ENCODE measurements at regions of chr19 and their contacts with region 1.

Region 1: DNA sequence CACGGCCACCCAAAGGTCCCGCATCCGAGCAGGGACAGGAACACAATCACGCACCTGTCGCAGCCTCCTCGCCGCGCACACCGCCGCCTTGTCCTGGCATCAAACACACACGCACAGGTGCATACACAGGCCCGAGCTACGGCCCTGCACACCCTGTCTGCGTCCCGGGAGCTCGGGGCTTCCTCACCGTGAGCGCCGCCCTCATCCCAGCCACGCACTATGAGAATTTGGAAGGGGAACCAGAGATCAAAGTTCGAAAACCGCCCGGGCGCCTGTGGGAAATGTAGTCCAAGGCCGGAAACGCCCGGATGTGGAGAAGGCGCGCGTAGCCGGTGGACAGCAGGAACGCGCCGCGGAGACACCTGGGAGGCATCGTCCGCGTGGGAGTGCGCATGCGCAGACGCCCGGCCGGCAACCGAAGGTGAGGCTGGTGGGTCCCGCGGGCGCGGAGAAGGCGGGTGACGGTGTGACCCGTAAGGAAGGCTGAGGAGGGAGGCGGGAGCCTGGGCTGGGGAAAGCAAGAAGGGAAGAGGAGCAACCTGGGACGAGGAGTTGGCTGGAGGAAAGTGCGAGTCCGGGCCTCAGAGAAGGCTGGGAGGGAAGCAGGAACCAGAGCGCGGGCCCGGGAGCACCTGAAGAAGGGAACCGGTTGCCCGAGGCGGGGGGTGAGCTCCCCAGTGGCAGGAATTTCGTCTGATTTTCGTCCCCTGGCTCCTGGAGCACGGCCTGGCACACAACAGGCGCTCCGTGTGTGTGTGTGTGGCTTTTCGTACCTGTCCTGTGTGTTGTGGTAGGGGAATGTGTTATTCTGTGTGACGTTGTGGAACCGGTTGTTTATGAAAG is at the start of gene ZNF567:
- DNase-seq: peak; percentile 98
- H3K4me3 ChIP-seq: peak within 1 kb of the TSS; percentile 64 to 83 (median 78)
- H3K27ac ChIP-seq: peak within 1 kb of the TSS; percentile 71 to 77 (median 76)
- H3K4me1 ChIP-seq: peaks cover 0 to 22% (median 17%) of the 10 kb centered on the region in 4 donors
- H3K27me3 ChIP-seq: no peaks in the 10 kb centered on the region
- CTCF ChIP-seq: no peak
- EP300 ChIP-seq: peak in 1 of 4 donors; percentile 27
- POLR2A ChIP-seq: peak; percentile 39 to 53
- total RNA-seq, gene ZNF567: 7.2 to 13.9 (median 11.0) TPM

Region 2: GRCh38 chr19:36652958-36653357 is 34.5 kb before region 1 on chr19:
- intact Hi-C with region 1: no loop called
- DNase-seq: no peak
- H3K4me3 ChIP-seq: no peak overlapping the region
- H3K27ac ChIP-seq: no peak overlapping the region
- H3K4me1 ChIP-seq: no peaks in the 10 kb centered on the region
- H3K27me3 ChIP-seq: no peaks in the 10 kb centered on the region
- CTCF ChIP-seq: no peak
- EP300 ChIP-seq: no peak
- POLR2A ChIP-seq: no peak

Region 3: DNA sequence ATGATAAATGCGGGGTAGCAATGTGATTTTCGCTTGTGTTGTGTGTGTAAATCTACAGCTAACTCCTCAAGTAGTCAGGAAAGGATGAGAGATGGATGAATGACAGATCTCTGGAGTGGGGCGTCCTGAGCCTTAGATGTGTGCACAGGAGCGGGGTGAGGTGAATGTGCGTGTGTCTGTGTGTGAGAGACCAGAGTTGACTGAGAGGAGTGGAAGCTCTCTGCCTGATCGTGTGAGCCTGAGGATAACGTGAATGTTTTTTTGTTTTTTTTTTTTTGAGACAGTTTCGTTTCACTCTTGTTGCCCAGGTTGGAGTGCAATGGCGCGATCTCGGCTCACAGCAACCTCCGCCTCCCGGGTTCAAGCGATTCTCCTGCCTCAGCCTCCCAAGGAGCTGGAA is 21.6 kb before region 1 on chr19:
- intact Hi-C with region 1: loop called (anchors 1 kb)
- DNase-seq: no peak
- H3K4me3 ChIP-seq: peak overlapping the region; percentile 66 to 86 (median 76)
- H3K27ac ChIP-seq: no peak overlapping the region
- H3K4me1 ChIP-seq: peaks cover 0 to 21% (median 17%) of the 10 kb centered on the region in 4 donors
- H3K27me3 ChIP-seq: no peaks in the 10 kb centered on the region
- CTCF ChIP-seq: no peak
- EP300 ChIP-seq: no peak
- POLR2A ChIP-seq: no peak

Region 4: GRCh38 chr19:36850559-36851442 is 163.4 kb after region 1 on chr19 and contains the start of gene ZNF345:
- intact Hi-C with region 1: loop called (anchors 1 kb)
- DNase-seq: peak; percentile 95
- H3K4me3 ChIP-seq: peak within 1 kb of the TSS; percentile 58 to 77 (median 70)
- H3K27ac ChIP-seq: peak within 1 kb of the TSS; percentile 88 to 92 (median 90)
- H3K4me1 ChIP-seq: peaks cover 0 to 22% (median 17%) of the 10 kb centered on the region in 4 donors
- H3K27me3 ChIP-seq: no peaks in the 10 kb centered on the region
- CTCF ChIP-seq: no peak
- EP300 ChIP-seq: no peak
- POLR2A ChIP-seq: peak in 1 of 2 donors; percentile 37
- total RNA-seq, gene ZNF345: 4.6 to 13.0 (median 6.2) TPM

Region 5: GRCh38 chr19:36963280-36963679 is 275.8 kb after region 1 on chr19:
- intact Hi-C with region 1: no loop called
- DNase-seq: no peak
- H3K4me3 ChIP-seq: no peak overlapping the region
- H3K27ac ChIP-seq: no peak overlapping the region
- H3K4me1 ChIP-seq: no peaks in the 10 kb centered on the region
- H3K27me3 ChIP-seq: no peaks in the 10 kb centered on the region
- CTCF ChIP-seq: no peak
- EP300 ChIP-seq: no peak
- POLR2A ChIP-seq: no peak

Measured in sigmoid colon (tissue), 7 donors.